ENCODE measurements at regions of chr7 and their contacts with region 1.

Region 1: DNA sequence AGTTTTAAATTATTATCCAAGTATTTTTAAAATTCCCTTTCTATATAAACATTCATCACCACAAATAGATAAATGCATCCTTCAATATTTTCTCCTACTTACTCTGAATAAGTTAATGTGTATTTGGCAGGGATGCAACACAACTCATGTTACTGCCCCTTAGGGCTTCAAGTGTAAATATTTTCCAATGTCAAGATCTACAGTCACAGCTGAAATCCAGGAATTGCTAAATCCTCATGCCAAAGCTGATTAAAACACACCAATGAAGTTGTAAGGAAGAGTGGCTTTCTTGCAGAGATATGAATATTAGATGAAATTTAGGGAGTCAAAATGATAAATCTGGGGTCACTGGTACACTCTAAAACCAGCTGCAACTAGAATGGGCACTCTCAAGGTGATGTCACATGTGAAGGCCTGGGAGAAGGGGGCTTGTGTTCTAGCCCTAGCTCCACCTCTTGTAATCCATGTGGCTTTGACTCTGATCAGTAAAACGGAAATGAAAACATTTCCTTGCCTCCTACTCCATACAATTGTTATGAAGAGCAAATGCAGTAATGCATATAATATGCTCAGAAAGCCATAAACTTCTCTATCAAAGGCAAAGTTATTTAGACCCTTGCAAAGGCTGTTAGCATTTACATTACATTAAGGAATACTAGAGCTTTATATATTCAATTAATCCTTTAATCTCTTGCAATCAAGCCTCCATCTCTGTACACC is 228.1 kb upstream of the NFE2L3 start:
- DNase-seq: no peak
- H3K4me3 ChIP-seq: no peak overlapping the region
- H3K27ac ChIP-seq: no peak overlapping the region
- H3K4me1 ChIP-seq: peaks cover 21% of the 10 kb centered on the region
- H3K27me3 ChIP-seq: no peaks in the 10 kb centered on the region
- CTCF ChIP-seq: no peak

Region 2: GRCh38 chr7:25940086-25940906 is 16.4 kb after region 1 on chr7:
- CTCF ChIA-PET with region 1: no interaction called
- dilution Hi-C with region 1: no loop called
- in situ Hi-C with region 1: no loop called
- intact Hi-C with region 1: loop called (anchors 1 kb)
- DNase-seq: no peak
- H3K4me3 ChIP-seq: peak overlapping the region; percentile 9 to 32 (median 18)
- H3K27ac ChIP-seq: peak overlapping the region; percentile 72
- H3K4me1 ChIP-seq: peaks cover 14% of the 10 kb centered on the region
- H3K27me3 ChIP-seq: no peaks in the 10 kb centered on the region
- CTCF ChIP-seq: no peak

Measured in mammary epithelial cell (primary cell).